ENCODE measurements at regions of chr2 and their contacts with region 1.

Region 1: GRCh38 chr2:85813982-85814801 is 60.4 kb downstream of the ATOH8 start:
- DNase-seq: peak; percentile 84
- H3K4me3 Mint-ChIP-seq: no peak overlapping the region
- H3K27ac Mint-ChIP-seq: no peak overlapping the region
- H3K4me1 Mint-ChIP-seq: peaks cover 5% of the 10 kb centered on the region
- H3K27me3 Mint-ChIP-seq: no peaks in the 10 kb centered on the region
- CTCF ChIP-seq: peak; percentile 97

Region 2: DNA sequence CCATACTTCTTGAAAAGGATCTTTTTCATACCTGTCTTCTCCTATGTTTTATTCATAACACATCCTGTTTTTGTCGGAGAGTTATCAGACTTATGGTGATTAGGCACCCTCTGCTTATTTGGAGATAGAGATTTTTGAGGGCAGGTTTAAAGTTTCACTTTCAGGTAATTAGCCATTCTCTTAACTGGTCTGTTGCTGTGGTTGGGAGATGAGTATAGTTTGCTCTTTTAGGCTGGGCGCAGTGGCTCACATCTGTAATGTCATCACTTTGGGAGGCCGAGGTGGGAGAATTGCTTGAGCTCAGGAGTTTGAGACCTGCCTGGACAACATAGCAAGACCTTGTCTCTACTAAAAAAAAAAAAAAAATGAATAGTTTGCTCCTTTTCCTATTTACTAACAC is 171.5 kb before region 1 on chr2:
- CTCF ChIA-PET with region 1: interaction called, 49 read pairs
- POLR2A ChIA-PET with region 1: interaction called, 3 read pairs
- intact Hi-C with region 1: loop called (anchors 1 kb)
- DNase-seq: no peak
- H3K4me3 Mint-ChIP-seq: no peak overlapping the region
- H3K27ac Mint-ChIP-seq: no peak overlapping the region
- H3K4me1 Mint-ChIP-seq: no peaks in the 10 kb centered on the region
- H3K27me3 Mint-ChIP-seq: no peaks in the 10 kb centered on the region
- CTCF ChIP-seq: no peak

Region 3: GRCh38 chr2:85707304-85707703 is 106.9 kb before region 1 on chr2:
- CTCF ChIA-PET with region 1: interaction called, 12 read pairs
- POLR2A ChIA-PET with region 1: no interaction called
- intact Hi-C with region 1: no loop called
- DNase-seq: peak; percentile 95
- H3K4me3 Mint-ChIP-seq: peak overlapping the region; percentile 36
- H3K27ac Mint-ChIP-seq: peak overlapping the region; percentile 94
- H3K4me1 Mint-ChIP-seq: peaks cover 56% of the 10 kb centered on the region
- H3K27me3 Mint-ChIP-seq: no peaks in the 10 kb centered on the region
- CTCF ChIP-seq: peak; percentile 65

Region 4: DNA sequence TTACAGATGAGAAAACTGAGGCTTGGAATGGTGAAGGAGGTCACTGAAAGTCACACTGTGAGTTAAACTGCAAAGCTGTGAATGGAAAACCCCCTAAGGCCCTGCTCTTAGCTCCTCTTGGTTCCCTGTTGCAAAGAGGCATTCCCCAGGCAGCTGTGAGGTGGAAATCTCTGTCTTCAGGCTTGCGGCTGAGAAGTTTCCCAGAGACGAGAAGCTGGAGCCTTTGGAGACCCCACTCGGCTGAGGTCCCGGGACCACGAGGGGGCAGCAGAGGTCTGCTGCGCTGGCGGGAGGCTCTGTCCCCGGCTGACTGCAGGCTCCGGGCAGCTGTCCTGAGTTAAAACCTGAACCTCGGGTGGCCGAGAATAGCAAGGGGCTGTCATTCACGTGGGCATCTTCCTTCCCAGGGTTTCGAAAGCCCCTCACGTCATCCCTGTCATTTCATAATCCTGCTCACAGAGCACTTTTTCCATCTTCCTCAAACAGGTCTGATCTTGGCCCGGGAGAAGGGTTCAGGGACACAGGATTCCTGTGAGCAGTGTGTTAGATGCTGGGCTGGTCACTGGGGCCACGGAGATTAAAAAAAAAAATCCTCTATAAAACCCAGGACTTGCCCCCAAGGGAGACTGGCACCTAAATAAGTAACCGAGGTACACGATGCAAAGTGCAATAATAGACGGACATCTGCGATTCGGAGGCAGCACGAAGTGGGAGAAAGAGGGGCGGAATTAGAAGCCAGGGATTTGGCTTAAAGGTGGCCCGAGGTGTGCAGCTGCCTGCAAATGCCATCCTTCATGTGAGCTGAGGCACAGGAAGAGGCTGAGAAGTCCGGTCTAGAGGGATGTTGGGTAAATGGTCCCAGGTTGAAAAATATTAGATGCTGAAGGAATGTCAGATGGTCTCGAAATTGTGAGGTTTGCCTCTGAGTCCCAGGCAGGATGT is 85.0 kb before region 1 on chr2:
- CTCF ChIA-PET with region 1: interaction called, 153 read pairs
- POLR2A ChIA-PET with region 1: interaction called, 10 read pairs
- intact Hi-C with region 1: loop called (anchors 1 kb)
- DNase-seq: peak; percentile 85
- H3K4me3 Mint-ChIP-seq: no peak overlapping the region
- H3K27ac Mint-ChIP-seq: no peak overlapping the region
- H3K4me1 Mint-ChIP-seq: peaks cover 6% of the 10 kb centered on the region
- H3K27me3 Mint-ChIP-seq: no peaks in the 10 kb centered on the region
- CTCF ChIP-seq: peak; percentile 91

Region 5: GRCh38 chr2:85750587-85751575 is 63.3 kb before region 1 on chr2:
- CTCF ChIA-PET with region 1: interaction called, 134 read pairs
- POLR2A ChIA-PET with region 1: interaction called, 3 read pairs
- intact Hi-C with region 1: loop called (anchors 1 kb)
- DNase-seq: peak; percentile 73
- H3K4me3 Mint-ChIP-seq: no peak overlapping the region
- H3K27ac Mint-ChIP-seq: no peak overlapping the region
- H3K4me1 Mint-ChIP-seq: peaks cover 9% of the 10 kb centered on the region
- H3K27me3 Mint-ChIP-seq: peaks cover 66% of the 10 kb centered on the region
- CTCF ChIP-seq: peak; percentile 83

Region 6: GRCh38 chr2:85799215-85799956 is 14.8 kb before region 1 on chr2:
- CTCF ChIA-PET with region 1: interaction called, 14 read pairs
- POLR2A ChIA-PET with region 1: interaction called, 4 read pairs
- intact Hi-C with region 1: no loop called
- DNase-seq: peak; percentile 74
- H3K4me3 Mint-ChIP-seq: no peak overlapping the region
- H3K27ac Mint-ChIP-seq: peak overlapping the region; percentile 13
- H3K4me1 Mint-ChIP-seq: peaks cover 10% of the 10 kb centered on the region
- H3K27me3 Mint-ChIP-seq: no peaks in the 10 kb centered on the region
- CTCF ChIP-seq: no peak

Region 7: DNA sequence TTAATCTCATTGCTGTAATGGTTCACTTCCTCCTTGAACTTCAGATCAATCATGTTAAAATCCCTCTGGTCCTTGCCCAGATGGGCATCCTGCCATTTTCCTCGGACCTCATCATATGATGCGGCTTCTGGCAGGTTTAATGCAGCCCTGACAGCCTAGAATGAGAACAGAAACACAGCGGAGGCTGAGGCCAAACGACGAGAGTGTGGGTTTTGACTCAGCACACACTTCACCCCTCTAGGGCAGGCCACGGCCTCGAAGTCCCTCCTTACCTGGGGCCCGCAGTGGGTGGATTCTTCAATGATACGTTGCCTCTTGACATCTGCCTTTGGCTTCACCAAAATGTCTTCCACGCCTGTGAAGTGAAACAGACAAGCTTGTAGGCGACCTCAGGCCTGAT is 234.7 kb after region 1 on chr2:
- CTCF ChIA-PET with region 1: no interaction called
- POLR2A ChIA-PET with region 1: no interaction called
- intact Hi-C with region 1: no loop called
- DNase-seq: no peak
- H3K4me3 Mint-ChIP-seq: no peak overlapping the region
- H3K27ac Mint-ChIP-seq: no peak overlapping the region
- H3K4me1 Mint-ChIP-seq: no peaks in the 10 kb centered on the region
- H3K27me3 Mint-ChIP-seq: no peaks in the 10 kb centered on the region
- CTCF ChIP-seq: no peak

Region 8: DNA sequence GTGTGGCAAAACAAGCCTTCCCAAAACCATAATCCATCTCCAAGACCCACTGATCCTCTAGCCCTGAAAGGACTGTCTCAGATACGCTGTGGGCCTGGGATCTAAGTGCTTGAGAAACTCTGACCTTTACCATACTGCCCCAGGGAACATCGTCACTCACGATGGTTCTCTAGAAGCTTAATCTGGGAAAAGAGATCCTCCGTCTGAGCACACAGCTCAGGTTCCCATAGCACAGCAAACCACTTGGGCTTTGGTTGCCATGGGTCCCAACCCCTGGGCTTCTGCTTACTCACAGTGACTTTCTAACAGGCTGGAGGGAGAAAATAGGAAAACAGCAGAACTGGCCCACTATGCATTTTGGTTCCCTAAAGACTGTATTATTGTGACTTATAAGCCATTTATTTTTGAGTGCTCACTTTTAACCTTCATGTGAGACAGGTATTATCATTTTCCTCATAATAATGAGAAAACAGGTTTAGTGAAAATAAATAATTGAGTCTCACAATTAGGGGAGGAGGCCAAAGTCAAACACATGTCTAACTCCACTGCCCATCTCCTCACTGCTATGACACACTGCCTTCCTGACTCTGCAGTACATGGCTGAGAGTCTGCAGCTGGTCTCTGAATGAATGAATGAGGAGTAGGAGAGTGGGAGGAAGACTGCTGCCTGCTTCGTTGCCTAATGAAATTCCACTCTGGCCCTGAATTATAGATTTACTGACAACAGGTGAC is 476.6 kb after region 1 on chr2:
- CTCF ChIA-PET with region 1: no interaction called
- POLR2A ChIA-PET with region 1: no interaction called
- intact Hi-C with region 1: no loop called
- DNase-seq: no peak
- H3K4me3 Mint-ChIP-seq: no peak overlapping the region
- H3K27ac Mint-ChIP-seq: no peak overlapping the region
- H3K4me1 Mint-ChIP-seq: peaks cover 6% of the 10 kb centered on the region
- H3K27me3 Mint-ChIP-seq: peaks cover 77% of the 10 kb centered on the region
- CTCF ChIP-seq: no peak

Measured in MCF 10A (cell line).